OCI-LY7 (cell line): ENCODE measurements at regions of chr15 and their contacts with region 1.

Region 1: GRCh38 chr15:35444557-35445204 is 101.3 kb downstream of the DPH6 start:
- DNase-seq: peak; percentile 38
- H3K4me3 ChIP-seq: no peak overlapping the region
- H3K27ac ChIP-seq: no peak overlapping the region
- H3K4me1 ChIP-seq: no peaks in the 10 kb centered on the region
- CTCF ChIP-seq: peak; percentile 97

Region 2: GRCh38 chr15:35078221-35078915 is 366.3 kb before region 1 on chr15:
- CTCF ChIA-PET with region 1: interaction called, 4 read pairs
- POLR2A ChIA-PET with region 1: no interaction called
- intact Hi-C with region 1: loop called (anchors 1 kb)
- DNase-seq: peak; percentile 56
- H3K4me3 ChIP-seq: no peak overlapping the region
- H3K27ac ChIP-seq: no peak overlapping the region
- H3K4me1 ChIP-seq: no peaks in the 10 kb centered on the region
- CTCF ChIP-seq: peak; percentile 90

Region 3: GRCh38 chr15:35293353-35294130 is 151.1 kb before region 1 on chr15:
- CTCF ChIA-PET with region 1: interaction called, 4 read pairs
- POLR2A ChIA-PET with region 1: no interaction called
- intact Hi-C with region 1: loop called (anchors 5 kb)
- DNase-seq: no peak
- H3K4me3 ChIP-seq: no peak overlapping the region
- H3K27ac ChIP-seq: no peak overlapping the region
- H3K4me1 ChIP-seq: no peaks in the 10 kb centered on the region
- CTCF ChIP-seq: no peak